IMR-90 (cell line): ENCODE measurements at regions of chr16 and their contacts with region 1.

Region 1: DNA sequence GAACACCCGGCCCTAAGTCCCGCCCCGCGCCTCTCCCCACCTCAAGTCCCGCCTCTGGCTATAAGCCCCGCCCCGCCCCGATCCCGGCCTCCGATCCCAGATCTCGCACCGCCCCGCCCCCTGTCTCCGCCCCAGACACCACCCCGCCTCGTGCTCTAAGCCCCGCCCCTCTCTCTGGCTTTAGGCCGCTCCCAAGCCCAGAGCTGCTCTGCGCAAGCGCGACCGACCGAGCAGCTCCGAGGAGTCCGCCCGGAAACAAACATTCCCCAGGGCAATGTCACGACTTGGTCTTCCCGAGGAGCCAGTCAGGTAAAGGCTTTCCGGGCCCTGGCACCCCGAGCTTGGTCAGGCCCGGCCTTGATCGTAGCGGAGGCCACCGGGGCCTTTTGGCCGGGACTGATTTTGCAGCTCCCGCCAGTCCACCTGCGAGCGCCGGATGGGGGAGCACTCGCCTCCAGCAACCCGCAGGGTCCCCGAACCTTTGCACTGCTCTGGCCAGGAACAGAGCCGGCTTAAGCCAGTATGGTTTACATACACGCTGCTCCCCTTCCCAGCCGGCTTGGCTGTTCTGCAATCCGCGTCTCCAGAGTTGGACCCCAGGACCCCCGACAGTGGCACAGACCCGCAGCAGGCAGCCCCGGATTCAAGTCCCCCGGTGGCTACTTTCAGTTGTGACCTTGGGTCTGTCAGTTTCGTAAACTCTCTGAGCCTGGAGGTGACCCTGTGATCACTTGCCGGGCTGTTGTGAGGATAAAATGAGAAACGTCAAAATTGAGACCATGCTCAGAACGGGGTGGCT is at the start of gene NUDT7:
- DNase-seq: peak; percentile 96
- ATAC-seq: peak; percentile 98
- H3K4me3 ChIP-seq: peak within 1 kb of the TSS; percentile 72
- H3K27ac ChIP-seq: peak within 1 kb of the TSS; percentile 90
- H3K4me1 ChIP-seq: no peaks in the 10 kb centered on the region
- H3K27me3 ChIP-seq: no peaks in the 10 kb centered on the region
- CTCF ChIP-seq: 0 out of 2 replicates have a peak, but pooled peaks have one; percentile 17
- POLR2A ChIP-seq: 0 out of 2 replicates have a peak, but pooled peaks have one; percentile 26
- RAD21 ChIP-seq: no peak
- total RNA-seq, gene NUDT7: 3.9 and 4.3 TPM in 2 replicates

Region 2: GRCh38 chr16:77690416-77690815 is 32.1 kb before region 1 on chr16:
- CTCF ChIA-PET with region 1: no interaction called
- POLR2A ChIA-PET with region 1: no interaction called
- dilution Hi-C with region 1: no loop called
- in situ Hi-C with region 1: no loop called
- intact Hi-C with region 1: no loop called
- DNase-seq: no peak
- ATAC-seq: no peak
- H3K4me3 ChIP-seq: no peak overlapping the region
- H3K27ac ChIP-seq: no peak overlapping the region
- H3K4me1 ChIP-seq: no peaks in the 10 kb centered on the region
- H3K27me3 ChIP-seq: peaks cover 34% of the 10 kb centered on the region
- CTCF ChIP-seq: no peak
- POLR2A ChIP-seq: no peak
- RAD21 ChIP-seq: no peak

Region 3: GRCh38 chr16:77739160-77739892 is 16.8 kb after region 1 on chr16:
- CTCF ChIA-PET with region 1: no interaction called
- POLR2A ChIA-PET with region 1: interaction called, 10 read pairs
- dilution Hi-C with region 1: no loop called
- in situ Hi-C with region 1: no loop called
- intact Hi-C with region 1: no loop called
- DNase-seq: peak; percentile 61
- ATAC-seq: 0 out of 2 replicates have a peak, but pooled peaks have one; percentile 46
- H3K4me3 ChIP-seq: no peak overlapping the region
- H3K27ac ChIP-seq: no peak overlapping the region
- H3K4me1 ChIP-seq: peaks cover 8% of the 10 kb centered on the region
- H3K27me3 ChIP-seq: no peaks in the 10 kb centered on the region
- CTCF ChIP-seq: no peak
- POLR2A ChIP-seq: no peak
- RAD21 ChIP-seq: no peak

Region 4: DNA sequence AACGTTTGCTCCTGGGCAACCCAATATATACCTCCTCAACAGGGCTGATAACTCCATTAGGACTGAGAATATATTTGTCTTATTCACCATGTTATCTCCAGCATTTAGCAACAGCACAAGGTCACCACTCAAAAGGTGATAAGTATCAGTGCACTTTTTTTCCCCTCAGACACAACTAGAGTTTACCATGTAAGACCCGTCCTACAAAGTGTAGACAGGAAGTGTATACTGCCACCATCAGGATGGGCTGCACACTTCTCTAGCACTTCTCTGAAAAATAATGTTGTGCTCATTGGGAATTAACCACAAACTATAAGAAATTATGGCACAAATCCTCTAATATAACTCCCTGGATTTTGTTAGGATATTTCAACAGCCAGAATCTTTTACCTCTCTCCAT is 60.2 kb after region 1 on chr16:
- CTCF ChIA-PET with region 1: interaction called, 4 read pairs
- POLR2A ChIA-PET with region 1: no interaction called
- dilution Hi-C with region 1: no loop called
- in situ Hi-C with region 1: no loop called
- intact Hi-C with region 1: loop called (anchors 2 kb)
- DNase-seq: peak; percentile 46
- ATAC-seq: no peak
- H3K4me3 ChIP-seq: no peak overlapping the region
- H3K27ac ChIP-seq: no peak overlapping the region
- H3K4me1 ChIP-seq: peaks cover 5% of the 10 kb centered on the region
- H3K27me3 ChIP-seq: no peaks in the 10 kb centered on the region
- CTCF ChIP-seq: peak; percentile 60
- POLR2A ChIP-seq: no peak
- RAD21 ChIP-seq: peak; percentile 49

Region 5: DNA sequence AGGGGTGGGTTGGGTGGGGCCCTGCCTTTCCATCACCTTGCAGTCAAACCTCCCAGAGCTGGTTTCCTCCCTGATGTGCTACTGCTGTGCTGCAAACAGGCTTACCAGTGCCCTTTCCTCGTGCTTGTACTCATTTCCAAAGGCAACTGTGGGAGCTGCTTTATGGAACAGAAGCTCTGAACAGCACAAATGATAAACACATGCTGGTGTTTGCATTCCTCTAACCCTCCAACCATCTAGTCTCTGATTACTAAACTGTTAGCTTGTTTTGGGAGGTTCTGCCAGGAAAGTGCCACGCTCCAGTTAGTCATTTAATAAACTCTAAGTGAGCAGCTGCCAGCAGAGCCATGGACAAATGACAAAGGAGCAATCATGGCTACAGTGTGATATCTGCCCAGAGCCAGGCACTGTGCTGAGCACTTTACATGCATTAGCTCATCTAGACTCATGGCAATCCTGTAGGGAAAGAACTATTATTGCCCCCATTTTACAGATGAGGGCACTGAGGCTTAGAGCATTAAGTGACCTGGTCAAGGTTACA is 176.2 kb after region 1 on chr16:
- CTCF ChIA-PET with region 1: no interaction called
- POLR2A ChIA-PET with region 1: no interaction called
- dilution Hi-C with region 1: no loop called
- in situ Hi-C with region 1: no loop called
- intact Hi-C with region 1: loop called (anchors 5 kb)
- DNase-seq: peak; percentile 89
- ATAC-seq: peak; percentile 89
- H3K4me3 ChIP-seq: no peak overlapping the region
- H3K27ac ChIP-seq: peak overlapping the region; percentile 83
- H3K4me1 ChIP-seq: peaks cover 27% of the 10 kb centered on the region
- H3K27me3 ChIP-seq: no peaks in the 10 kb centered on the region
- CTCF ChIP-seq: no peak
- POLR2A ChIP-seq: no peak
- RAD21 ChIP-seq: no peak